Natural killer cell (primary cell): ENCODE measurements at regions of chr1 and their contacts with region 1.

Region 1: DNA sequence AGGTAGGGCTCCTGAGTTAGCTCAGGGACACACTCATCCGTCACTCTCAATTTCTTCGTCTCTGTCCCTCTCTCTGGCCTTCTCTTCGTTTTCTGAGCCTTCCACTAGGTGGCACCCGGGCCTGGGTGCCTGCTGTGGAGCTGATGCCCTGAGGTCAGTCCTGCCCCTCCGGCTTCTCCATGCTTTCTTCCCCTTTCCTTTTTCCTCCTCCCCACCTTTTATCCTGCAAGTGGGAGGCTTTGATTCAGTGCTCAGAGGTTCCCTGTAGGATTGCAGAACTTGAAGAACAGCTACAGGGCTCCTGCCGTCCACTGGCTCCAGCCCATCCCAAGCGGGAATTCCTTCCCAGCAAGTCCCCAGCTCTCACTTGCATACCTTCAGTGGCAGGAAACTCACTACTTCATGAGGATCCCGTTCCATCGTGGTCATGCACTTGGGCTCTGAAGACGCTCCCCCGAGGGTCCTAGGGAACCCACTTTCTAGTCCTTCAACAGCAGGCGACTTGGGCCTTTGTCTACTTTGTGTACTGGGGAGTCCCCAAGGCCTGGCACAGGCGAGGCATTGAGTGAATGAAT is 45.6 kb downstream of the SRRM1 start:
- DNase-seq: peak; percentile 47 to 75
- ATAC-seq: peak; percentile 73 to 94 (median 94)
- H3K4me3 ChIP-seq: no peak overlapping the region
- H3K4me3 Mint-ChIP-seq: no peak overlapping the region
- H3K27ac ChIP-seq: no peak overlapping the region
- H3K27ac Mint-ChIP-seq: no peak overlapping the region
- H3K4me1 ChIP-seq: peaks cover 3% of the 10 kb centered on the region
- H3K4me1 Mint-ChIP-seq: peaks cover 11 to 16% of the 10 kb centered on the region in 2 donors
- H3K27me3 ChIP-seq: no peaks in the 10 kb centered on the region
- H3K27me3 Mint-ChIP-seq: no peaks in the 10 kb centered on the region
- CTCF ChIP-seq: peak; percentile 82

Region 2: GRCh38 chr1:24830680-24831272 is 142.1 kb after region 1 on chr1:
- intact Hi-C with region 1: loop called (anchors 2 kb)
- DNase-seq: peak in 1 of 2 donors; percentile 76
- ATAC-seq: peak; percentile 72 to 75 (median 74)
- H3K4me3 ChIP-seq: no peak overlapping the region
- H3K4me3 Mint-ChIP-seq: no peak overlapping the region
- H3K27ac ChIP-seq: no peak overlapping the region
- H3K27ac Mint-ChIP-seq: no peak overlapping the region
- H3K4me1 ChIP-seq: no peaks in the 10 kb centered on the region
- H3K4me1 Mint-ChIP-seq: peaks cover 0 to 4% of the 10 kb centered on the region in 2 donors
- H3K27me3 ChIP-seq: no peaks in the 10 kb centered on the region
- H3K27me3 Mint-ChIP-seq: peaks cover 0 to 3% of the 10 kb centered on the region in 2 donors
- CTCF ChIP-seq: peak; percentile 93